ENCODE measurements at regions of chr4 and their contacts with region 1.

Region 1: GRCh38 chr4:5409972-5410618 is 298.3 kb downstream of the EVC2 start:
- DNase-seq: no peak
- H3K4me3 ChIP-seq: no peak overlapping the region
- H3K27ac ChIP-seq: no peak overlapping the region
- H3K27me3 ChIP-seq: peaks cover 5% of the 10 kb centered on the region
- CTCF ChIP-seq: peak; percentile 27

Region 2: DNA sequence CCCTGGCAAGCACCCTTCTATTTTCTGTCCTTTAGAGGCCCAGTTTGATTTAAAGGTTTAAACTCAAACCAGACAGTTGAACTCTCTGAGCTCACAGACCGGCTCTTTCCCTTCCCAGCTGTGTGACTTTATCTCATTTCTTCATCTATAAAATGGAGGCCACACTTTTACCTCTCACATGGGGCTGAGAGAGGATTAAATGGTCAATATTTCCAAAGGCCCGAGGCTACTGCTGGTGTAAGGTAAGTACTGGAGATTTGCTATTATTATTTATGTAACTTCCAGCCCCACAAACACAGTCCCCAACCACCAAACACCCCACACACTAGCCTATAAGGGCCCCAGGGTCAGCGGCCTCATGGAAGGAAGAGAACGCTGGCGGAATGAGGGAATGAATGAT is 377.3 kb before region 1 on chr4:
- CTCF ChIA-PET with region 1: interaction called, 13 read pairs
- POLR2A ChIA-PET with region 1: no interaction called
- DNase-seq: no peak
- H3K4me3 ChIP-seq: no peak overlapping the region
- H3K27ac ChIP-seq: no peak overlapping the region
- H3K27me3 ChIP-seq: peaks cover 7% of the 10 kb centered on the region
- CTCF ChIP-seq: no peak

Region 3: GRCh38 chr4:5389756-5390310 is 20.3 kb before region 1 on chr4:
- CTCF ChIA-PET with region 1: no interaction called
- POLR2A ChIA-PET with region 1: no interaction called
- DNase-seq: no peak
- H3K4me3 ChIP-seq: no peak overlapping the region
- H3K27ac ChIP-seq: no peak overlapping the region
- H3K27me3 ChIP-seq: peaks cover 2% of the 10 kb centered on the region
- CTCF ChIP-seq: no peak

Region 4: DNA sequence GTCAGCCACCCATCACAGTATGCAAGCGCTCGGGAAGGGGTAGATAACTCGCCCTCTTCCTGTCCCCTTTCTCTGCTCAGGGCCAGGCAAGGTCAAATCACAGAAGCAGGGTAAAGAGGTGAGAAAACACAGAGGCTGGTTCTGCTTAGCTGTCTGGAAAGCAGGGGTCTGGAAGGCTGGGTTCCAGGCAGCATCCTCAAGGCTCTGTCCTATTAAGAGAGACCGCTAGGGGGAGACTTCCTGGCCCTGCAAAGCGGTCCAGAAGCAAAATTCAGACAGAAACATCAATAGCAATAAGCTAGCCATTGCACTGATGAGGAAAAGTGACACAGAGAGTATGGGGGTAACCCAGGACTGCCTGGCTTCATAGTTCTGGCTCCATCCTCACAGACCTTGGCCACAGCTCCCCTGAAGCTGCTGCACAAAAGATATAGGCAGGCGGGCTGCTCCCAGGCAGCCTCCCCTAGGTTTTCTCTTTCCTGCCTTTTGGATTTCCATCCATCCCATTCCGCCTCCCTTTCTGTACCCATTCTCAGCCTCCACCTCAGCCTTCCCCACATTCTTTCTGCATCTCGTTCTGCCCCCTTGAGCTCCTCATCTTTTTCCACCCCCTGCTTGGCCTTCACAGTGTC is 10.2 kb before region 1 on chr4:
- CTCF ChIA-PET with region 1: interaction called, 21 read pairs
- POLR2A ChIA-PET with region 1: no interaction called
- DNase-seq: peak; percentile 8
- H3K4me3 ChIP-seq: no peak overlapping the region
- H3K27ac ChIP-seq: no peak overlapping the region
- H3K27me3 ChIP-seq: no peaks in the 10 kb centered on the region
- CTCF ChIP-seq: peak; percentile 84